Sigmoid colon (tissue), 7 donors: ENCODE measurements at regions of chrX and their contacts with region 1.

Region 1: DNA sequence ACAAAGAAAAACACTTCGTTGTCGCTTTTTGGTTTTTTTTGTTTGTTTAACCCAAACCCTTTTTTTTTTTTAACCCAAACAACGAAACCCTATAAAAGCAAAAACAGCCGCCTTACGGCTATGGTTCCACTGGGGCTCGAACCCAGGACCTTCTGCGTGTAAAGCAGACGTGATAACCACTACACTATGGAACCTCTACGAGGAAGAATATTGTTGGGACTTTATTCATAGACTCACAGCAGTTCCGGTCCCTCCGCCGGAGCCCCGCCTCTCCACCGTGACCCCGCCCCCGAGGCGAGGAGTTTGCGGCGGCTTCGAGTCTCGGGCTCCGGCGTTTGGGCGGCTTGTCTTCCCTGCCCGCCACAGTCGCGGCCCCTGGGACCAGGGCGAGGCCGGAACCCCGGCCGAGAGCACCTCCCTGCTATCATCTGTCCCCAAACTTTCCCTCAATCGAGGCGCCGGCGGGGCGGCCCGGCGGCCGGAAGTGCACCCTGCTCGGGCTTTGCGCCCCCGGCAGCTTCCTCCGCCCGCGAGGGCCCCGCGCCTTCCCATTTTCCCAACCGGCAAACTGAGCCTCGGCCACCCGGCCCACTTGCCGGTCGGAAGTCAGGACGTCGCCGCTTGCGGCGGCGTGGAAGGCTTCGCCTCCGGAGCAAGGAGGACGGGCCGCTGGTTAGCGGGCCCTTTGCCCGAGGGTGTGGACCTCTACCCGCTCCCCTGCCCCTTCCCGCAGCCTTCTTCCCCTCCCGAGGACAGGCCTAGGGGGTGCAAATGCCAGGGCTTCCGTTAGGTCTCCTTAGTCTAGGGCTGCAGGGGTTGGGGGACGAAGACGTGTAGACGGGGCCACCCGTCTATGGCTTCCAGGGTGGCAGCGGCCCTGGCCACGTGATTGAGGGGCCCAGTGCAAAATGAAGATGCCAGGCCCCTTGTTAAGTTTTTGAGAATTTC is 3.2 kb upstream of the RS1 start:
- DNase-seq: peak; percentile 85
- H3K4me3 ChIP-seq: peak overlapping the region; percentile 67 to 75 (median 72)
- H3K27ac ChIP-seq: peak overlapping the region; percentile 88 to 90 (median 88)
- H3K4me1 ChIP-seq: no peaks in the 10 kb centered on the region
- H3K27me3 ChIP-seq: no peaks in the 10 kb centered on the region
- CTCF ChIP-seq: no peak
- EP300 ChIP-seq: no peak
- POLR2A ChIP-seq: no peak

Region 2: DNA sequence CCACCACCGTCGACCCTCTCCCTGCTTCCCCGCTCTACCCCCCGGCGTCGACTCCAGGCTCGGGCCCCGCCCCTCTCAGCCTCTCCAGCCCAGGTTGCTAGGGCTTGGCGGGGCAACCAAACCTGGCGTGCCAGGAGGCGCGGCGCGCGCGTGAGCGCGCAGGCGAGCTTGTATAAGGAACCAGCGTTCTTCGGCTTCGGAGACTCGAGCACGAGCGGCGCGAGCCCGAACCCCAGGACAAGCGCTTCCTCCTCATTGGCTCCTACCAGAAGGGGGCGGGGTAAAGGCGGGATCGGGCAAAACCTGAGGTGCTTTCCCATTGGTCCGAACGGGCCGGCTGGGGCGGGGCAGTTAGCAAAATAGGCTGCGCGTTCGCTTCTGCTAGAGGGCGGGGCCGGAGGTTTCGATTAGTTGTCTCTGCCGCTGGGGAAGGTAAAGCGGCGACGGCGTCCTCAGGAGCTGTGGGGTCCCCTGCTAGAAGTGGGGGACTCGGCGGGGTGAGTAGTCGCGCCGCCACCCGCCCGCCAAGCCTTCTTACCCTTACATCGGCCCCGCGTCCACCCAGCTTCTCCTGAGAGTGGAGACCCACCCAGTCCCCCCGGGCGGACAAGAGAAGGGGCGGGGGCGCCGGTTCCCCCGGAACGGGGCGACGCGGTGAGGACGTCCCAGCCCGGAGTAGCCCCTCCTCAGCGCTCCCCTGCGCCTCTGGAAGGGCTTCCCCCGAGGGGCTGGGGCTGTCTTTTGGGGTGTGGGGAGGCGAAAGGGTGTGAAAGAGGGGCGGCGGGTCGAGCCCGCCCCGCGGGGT is 249.7 kb before region 1 on chrX and contains the start of gene CDKL5:
- intact Hi-C with region 1: loop called (anchors 2 kb)
- DNase-seq: peak; percentile 98
- H3K4me3 ChIP-seq: peak within 1 kb of the TSS; percentile 72 to 83 (median 78)
- H3K27ac ChIP-seq: peak within 1 kb of the TSS; percentile 73 to 84 (median 80)
- H3K4me1 ChIP-seq: no peaks in the 10 kb centered on the region
- H3K27me3 ChIP-seq: no peaks in the 10 kb centered on the region
- CTCF ChIP-seq: no peak
- EP300 ChIP-seq: no peak
- POLR2A ChIP-seq: peak; percentile 22 to 38
- total RNA-seq, gene CDKL5: 5.2 to 8.9 (median 5.3) TPM

Region 3: GRCh38 chrX:18616688-18617406 is 58.2 kb before region 1 on chrX:
- intact Hi-C with region 1: no loop called
- DNase-seq: no peak
- H3K4me3 ChIP-seq: no peak overlapping the region
- H3K27ac ChIP-seq: no peak overlapping the region
- H3K4me1 ChIP-seq: no peaks in the 10 kb centered on the region
- H3K27me3 ChIP-seq: no peaks in the 10 kb centered on the region
- CTCF ChIP-seq: no peak
- EP300 ChIP-seq: no peak
- POLR2A ChIP-seq: no peak

Region 4: DNA sequence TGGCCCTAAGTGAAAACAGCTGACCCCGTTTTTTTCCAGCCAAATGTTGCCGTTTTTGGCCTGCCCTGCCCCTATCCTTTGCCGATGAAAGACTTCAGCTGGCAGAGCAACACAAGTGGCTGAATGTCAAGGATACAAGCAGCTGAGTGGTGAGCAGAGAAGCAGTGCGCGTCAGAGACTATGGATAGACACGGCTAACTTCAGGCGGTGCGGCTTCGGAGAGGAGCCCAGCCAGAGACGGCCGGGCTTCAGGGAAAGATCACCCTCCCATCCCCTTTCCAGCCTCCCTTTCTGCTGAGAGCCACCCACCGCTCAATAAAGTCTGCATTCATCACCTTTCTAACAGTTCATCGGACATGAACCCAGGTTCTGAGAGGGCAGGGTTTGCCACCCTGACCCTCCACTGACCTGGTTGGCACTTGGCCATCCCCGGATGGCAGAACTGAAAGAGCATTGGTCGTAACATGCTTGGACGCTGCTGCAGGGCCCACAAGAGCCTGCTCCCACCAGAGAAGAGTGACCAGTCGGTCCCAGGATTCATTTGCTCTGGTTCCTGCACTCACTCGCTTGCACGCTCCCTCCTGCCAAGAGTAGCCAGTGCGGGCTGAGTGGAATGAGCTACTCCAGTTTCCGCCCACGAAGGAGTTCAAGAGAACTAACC is 158.1 kb after region 1 on chrX:
- intact Hi-C with region 1: no loop called
- DNase-seq: peak; percentile 72
- H3K4me3 ChIP-seq: no peak overlapping the region
- H3K27ac ChIP-seq: peak overlapping the region; percentile 12 to 53 (median 46)
- H3K4me1 ChIP-seq: no peaks in the 10 kb centered on the region
- H3K27me3 ChIP-seq: no peaks in the 10 kb centered on the region
- CTCF ChIP-seq: no peak
- EP300 ChIP-seq: no peak
- POLR2A ChIP-seq: no peak

Region 5: DNA sequence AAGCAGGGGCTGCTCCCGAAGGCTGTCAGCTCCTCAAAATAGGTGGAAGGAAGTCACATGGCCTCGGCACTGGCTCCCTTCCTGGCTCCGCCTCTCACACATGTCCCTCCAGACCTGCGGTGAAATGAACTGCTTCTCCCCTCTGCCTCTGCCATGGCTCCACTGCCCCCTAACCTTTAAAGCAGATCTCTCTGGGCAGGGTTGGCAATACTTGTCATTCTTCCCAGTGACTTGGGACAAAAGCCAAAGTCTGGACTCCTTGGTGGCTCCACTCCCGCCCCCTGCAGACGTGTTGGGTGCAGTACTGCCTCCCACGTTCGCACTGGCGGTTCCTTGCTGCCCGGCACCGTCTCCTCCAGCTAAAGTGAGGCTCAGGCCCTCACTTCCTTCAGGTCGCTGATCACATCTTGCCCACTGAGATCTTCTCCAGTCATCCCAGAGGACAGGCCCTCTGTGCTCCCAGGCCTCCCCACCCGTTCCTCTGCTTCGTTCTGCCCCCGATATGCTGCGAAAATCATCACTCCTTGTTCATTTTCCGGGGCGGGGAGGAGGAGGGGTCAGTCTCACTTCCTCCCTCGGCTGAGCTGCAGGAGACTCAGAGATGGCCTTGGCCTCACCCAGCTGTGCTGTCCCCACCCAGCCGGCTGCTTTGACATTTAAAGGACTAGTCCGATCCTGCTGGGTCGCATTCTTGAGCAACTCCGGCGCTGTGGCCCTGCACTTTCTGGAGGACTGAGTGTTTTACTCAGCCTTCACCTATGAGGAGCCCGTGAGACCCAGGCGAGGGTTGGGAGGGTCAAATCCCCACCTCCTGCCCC is 211.5 kb after region 1 on chrX:
- intact Hi-C with region 1: loop called (anchors 5 kb)
- DNase-seq: peak; percentile 88
- H3K4me3 ChIP-seq: peak overlapping the region; percentile 17 to 41 (median 33)
- H3K27ac ChIP-seq: peak overlapping the region; percentile 69 to 72 (median 70)
- H3K4me1 ChIP-seq: peaks cover 0 to 21% (median 15%) of the 10 kb centered on the region in 4 donors
- H3K27me3 ChIP-seq: no peaks in the 10 kb centered on the region
- CTCF ChIP-seq: peak; percentile 33 to 61 (median 50)
- EP300 ChIP-seq: no peak
- POLR2A ChIP-seq: no peak

Region 6: DNA sequence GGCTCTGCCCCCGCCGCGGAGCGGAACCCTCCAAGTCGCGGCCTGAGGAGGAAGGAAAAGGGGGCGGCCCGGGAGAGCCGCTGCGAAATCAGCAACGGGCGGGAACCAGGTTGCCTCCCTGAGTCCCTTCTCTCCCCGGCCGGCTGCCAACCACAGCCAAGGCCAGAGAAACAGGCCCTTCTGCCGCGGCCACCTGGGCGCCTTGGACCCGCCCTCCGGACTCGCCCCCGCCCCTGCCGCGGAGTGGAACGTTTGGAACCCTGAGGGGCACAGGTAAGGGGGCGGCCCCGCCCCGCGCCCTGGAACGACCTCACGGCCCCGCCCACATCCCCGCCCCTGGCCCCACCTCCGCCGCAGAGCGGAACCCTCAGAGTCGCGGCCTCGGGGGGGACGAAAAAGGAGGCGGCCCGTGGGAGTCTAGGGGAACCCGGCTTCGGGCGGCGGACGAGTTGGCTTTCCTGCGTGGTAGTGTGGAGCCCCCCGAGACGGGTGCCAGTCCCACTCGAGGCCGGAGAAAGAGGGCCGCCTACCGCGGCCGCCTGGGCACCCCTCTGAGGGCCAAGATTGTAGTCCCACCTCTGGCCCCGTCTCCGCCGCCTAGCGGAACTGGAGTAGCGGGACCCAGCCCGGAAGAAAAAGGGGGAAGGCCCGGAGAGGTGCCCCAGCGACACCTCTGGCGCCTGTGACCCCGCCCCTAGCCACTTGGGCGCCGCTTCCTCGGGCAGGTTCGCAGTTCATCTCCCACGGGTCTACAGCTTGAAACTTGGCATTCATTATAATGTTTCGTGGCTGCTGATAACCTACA is 309.5 kb after region 1 on chrX:
- intact Hi-C with region 1: loop called (anchors 10 kb)
- DNase-seq: peak; percentile 89
- H3K4me3 ChIP-seq: peak overlapping the region; percentile 47 to 74 (median 70)
- H3K27ac ChIP-seq: peak overlapping the region; percentile 86 to 90 (median 88)
- H3K4me1 ChIP-seq: peaks cover 0 to 11% (median 6%) of the 10 kb centered on the region in 4 donors
- H3K27me3 ChIP-seq: peaks cover 0 to 5% (median 0%) of the 10 kb centered on the region in 3 donors
- CTCF ChIP-seq: peak; percentile 54 to 66 (median 60)
- EP300 ChIP-seq: no peak
- POLR2A ChIP-seq: no peak

Region 7: GRCh38 chrX:19212037-19212436 is 537.0 kb after region 1 on chrX:
- intact Hi-C with region 1: no loop called
- DNase-seq: no peak
- H3K4me3 ChIP-seq: no peak overlapping the region
- H3K27ac ChIP-seq: no peak overlapping the region
- H3K4me1 ChIP-seq: no peaks in the 10 kb centered on the region
- H3K27me3 ChIP-seq: no peaks in the 10 kb centered on the region
- CTCF ChIP-seq: no peak
- EP300 ChIP-seq: no peak
- POLR2A ChIP-seq: no peak

Region 8: GRCh38 chrX:19343535-19344408 is 668.7 kb after region 1 on chrX and contains the start of gene PDHA1:
- intact Hi-C with region 1: loop called (anchors 10 kb)
- DNase-seq: peak; percentile 96
- H3K4me3 ChIP-seq: peak within 1 kb of the TSS; percentile 66 to 74 (median 70)
- H3K27ac ChIP-seq: peak within 1 kb of the TSS; percentile 83 to 95 (median 92)
- H3K4me1 ChIP-seq: peaks cover 0 to 14% (median 9%) of the 10 kb centered on the region in 4 donors
- H3K27me3 ChIP-seq: no peaks in the 10 kb centered on the region
- CTCF ChIP-seq: no peak
- EP300 ChIP-seq: peak in 1 of 4 donors; percentile 60
- POLR2A ChIP-seq: peak; percentile 4 to 39
- total RNA-seq, gene PDHA1: 51.7 to 71.3 (median 60.3) TPM